ENCODE measurements at regions of chr1 and their contacts with region 1.

Region 1: GRCh38 chr1:210499956-210500355 is 171.3 kb downstream of the HHAT start:
- DNase-seq: no peak
- H3K4me3 ChIP-seq: no peak overlapping the region
- H3K27ac ChIP-seq: no peak overlapping the region
- H3K4me1 ChIP-seq: no peaks in the 10 kb centered on the region
- H3K27me3 ChIP-seq: no peaks in the 10 kb centered on the region
- CTCF ChIP-seq: no peak
- POLR2A ChIP-seq: no peak

Region 2: GRCh38 chr1:210516696-210517459 is 16.9 kb after region 1 on chr1:
- CTCF ChIA-PET with region 1: no interaction called
- POLR2A ChIA-PET with region 1: no interaction called
- dilution Hi-C with region 1: no loop called
- intact Hi-C with region 1: loop called (anchors 2 kb)
- DNase-seq: no peak
- H3K4me3 ChIP-seq: no peak overlapping the region
- H3K27ac ChIP-seq: no peak overlapping the region
- H3K4me1 ChIP-seq: no peaks in the 10 kb centered on the region
- H3K27me3 ChIP-seq: no peaks in the 10 kb centered on the region
- CTCF ChIP-seq: no peak
- POLR2A ChIP-seq: no peak

Measured in endothelial cell of umbilical vein (primary cell).